Naive thymus-derived CD4-positive, alpha-beta T cell (primary cell): ENCODE measurements at regions of chr14 and their contacts with region 1.

Region 1: GRCh38 chr14:61444215-61444768 is 122.9 kb downstream of the PRKCH start:
- DNase-seq: peak in 8 of 9 donors; percentile 36 to 77 (median 54)
- ATAC-seq: peak; percentile 89
- H3K4me3 ChIP-seq: peak overlapping the region; percentile 9
- H3K4me3 Mint-ChIP-seq: peak overlapping the region; percentile 61 to 89 (median 82)
- H3K27ac ChIP-seq: peak overlapping the region; percentile 59
- H3K27ac Mint-ChIP-seq: peak overlapping the region in 8 of 9 donors; percentile 86 to 97 (median 92)
- H3K4me1 ChIP-seq: peaks cover 77 to 90% of the 10 kb centered on the region in 2 donors
- H3K4me1 Mint-ChIP-seq: peaks cover 56 to 99% (median 93%) of the 10 kb centered on the region in 7 donors
- H3K27me3 ChIP-seq: no peaks in the 10 kb centered on the region
- H3K27me3 Mint-ChIP-seq: no peaks in the 10 kb centered on the region

Region 2: GRCh38 chr14:61296719-61297502 is 147.4 kb before region 1 on chr14:
- CTCF ChIA-PET with region 1: no interaction called
- POLR2A ChIA-PET with region 1: no interaction called
- intact Hi-C with region 1: loop called in 1 of 2 experiments (anchors 1 kb)
- DNase-seq: peak in 7 of 9 donors; percentile 38 to 68 (median 52)
- ATAC-seq: peak; percentile 85
- H3K4me3 ChIP-seq: no peak overlapping the region
- H3K4me3 Mint-ChIP-seq: peak overlapping the region in 2 of 10 donors; percentile 20 to 39
- H3K27ac ChIP-seq: no peak overlapping the region
- H3K27ac Mint-ChIP-seq: peak overlapping the region in 7 of 9 donors; percentile 26 to 88 (median 66)
- H3K4me1 ChIP-seq: peaks cover 15 to 40% of the 10 kb centered on the region in 2 donors
- H3K4me1 Mint-ChIP-seq: peaks cover 18 to 59% (median 56%) of the 10 kb centered on the region in 7 donors
- H3K27me3 ChIP-seq: no peaks in the 10 kb centered on the region
- H3K27me3 Mint-ChIP-seq: no peaks in the 10 kb centered on the region

Region 3: DNA sequence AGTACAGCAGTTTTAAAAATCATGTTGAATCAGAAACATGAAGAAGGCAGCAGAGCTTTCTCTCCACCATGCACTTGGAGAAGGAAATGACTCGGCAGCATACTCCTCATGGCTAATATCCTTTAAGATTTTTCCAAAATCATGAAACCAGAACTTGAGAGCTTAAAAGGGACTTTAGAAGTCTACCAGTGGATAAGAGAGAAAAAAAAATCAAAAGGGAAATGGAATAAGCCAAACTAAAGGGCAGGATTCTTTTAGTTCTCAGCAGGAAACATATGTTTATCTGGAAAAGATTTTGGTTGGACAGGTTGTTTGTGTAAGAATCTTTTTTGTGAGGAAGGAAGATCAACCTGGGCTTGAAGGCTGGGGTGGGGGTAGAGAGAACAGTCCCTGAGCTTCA is 11.1 kb before region 1 on chr14:
- CTCF ChIA-PET with region 1: interaction called, 3 read pairs
- POLR2A ChIA-PET with region 1: interaction called, 8 read pairs
- intact Hi-C with region 1: loop called in 1 of 2 experiments (anchors 1 kb)
- DNase-seq: no peak
- ATAC-seq: no peak
- H3K4me3 ChIP-seq: no peak overlapping the region
- H3K4me3 Mint-ChIP-seq: peak overlapping the region; percentile 30 to 82 (median 56)
- H3K27ac ChIP-seq: peak overlapping the region; percentile 41
- H3K27ac Mint-ChIP-seq: peak overlapping the region in 7 of 9 donors; percentile 70 to 95 (median 86)
- H3K4me1 ChIP-seq: peaks cover 78 to 82% of the 10 kb centered on the region in 2 donors
- H3K4me1 Mint-ChIP-seq: peaks cover 63 to 100% (median 95%) of the 10 kb centered on the region in 7 donors
- H3K27me3 ChIP-seq: no peaks in the 10 kb centered on the region
- H3K27me3 Mint-ChIP-seq: no peaks in the 10 kb centered on the region

Region 4: GRCh38 chr14:61461808-61462275 is 17.6 kb after region 1 on chr14:
- CTCF ChIA-PET with region 1: no interaction called
- POLR2A ChIA-PET with region 1: no interaction called
- intact Hi-C with region 1: no loop called
- DNase-seq: peak in 7 of 9 donors; percentile 59 to 78 (median 71)
- ATAC-seq: peak; percentile 76
- H3K4me3 ChIP-seq: no peak overlapping the region
- H3K4me3 Mint-ChIP-seq: peak overlapping the region; percentile 4 to 69 (median 41)
- H3K27ac ChIP-seq: peak overlapping the region; percentile 56
- H3K27ac Mint-ChIP-seq: peak overlapping the region in 8 of 9 donors; percentile 85 to 97 (median 90)
- H3K4me1 ChIP-seq: peaks cover 12 to 21% of the 10 kb centered on the region in 2 donors
- H3K4me1 Mint-ChIP-seq: peaks cover 33 to 87% (median 82%) of the 10 kb centered on the region in 7 donors
- H3K27me3 ChIP-seq: no peaks in the 10 kb centered on the region
- H3K27me3 Mint-ChIP-seq: no peaks in the 10 kb centered on the region